Activated T-helper 2 cell treated with anti-CD3 and anti-CD28 coated beads, Interferon-gamma antibody, Interleukin-2, Interleukin-4, amounts not matched to agents 10 μg/mL and 5 μg/mL and 100 μg/mL, durations not matched to agents 14 hours and 24 hours and 36 hours (primary cell): ENCODE measurements at regions of chr10 and their contacts with region 1.

Region 1: DNA sequence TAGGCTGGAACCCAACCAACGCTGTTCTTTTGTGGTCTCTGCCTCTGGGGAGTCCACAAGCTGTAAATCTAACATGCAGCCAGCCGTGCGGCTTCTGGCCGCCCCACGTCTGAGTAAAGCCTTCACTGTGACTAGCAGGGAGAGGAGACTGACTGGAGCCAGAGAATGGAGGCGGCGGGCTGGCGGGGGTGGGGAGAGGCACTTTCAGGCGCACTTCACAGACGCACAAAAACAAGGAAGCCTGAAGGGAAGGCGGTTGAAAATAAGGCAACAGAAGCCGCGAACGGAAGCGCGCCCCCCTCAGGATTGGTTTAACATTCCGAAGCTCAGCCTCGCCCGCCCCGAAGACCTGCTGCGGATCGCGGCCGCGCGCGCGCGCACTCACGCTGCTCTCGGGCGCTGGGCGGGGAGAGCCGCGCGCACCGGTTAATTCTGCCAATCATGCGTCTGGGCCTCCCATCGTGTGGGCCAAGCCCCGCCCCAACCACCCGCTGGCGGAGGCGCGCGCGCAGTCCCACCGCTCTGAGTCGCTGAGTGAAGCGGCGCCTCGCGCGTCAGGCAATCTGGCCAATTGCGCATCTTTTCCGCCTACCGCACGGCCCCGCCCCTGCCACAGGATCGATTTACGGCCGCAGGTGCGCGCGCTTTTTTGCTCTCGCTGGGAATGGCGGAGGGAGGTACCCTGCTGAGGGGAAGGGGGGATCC is at the start of gene SFR1:
- DNase-seq: peak; percentile 99
- H3K4me3 Mint-ChIP-seq: peak within 1 kb of the TSS; percentile 90
- H3K27ac Mint-ChIP-seq: peak within 1 kb of the TSS; percentile 99
- H3K4me1 Mint-ChIP-seq: peaks cover 40% of the 10 kb centered on the region
- H3K27me3 Mint-ChIP-seq: peaks cover 11% of the 10 kb centered on the region
- total RNA-seq, gene SFR1: 11.7 and 12.0 TPM in 2 replicates

Region 2: DNA sequence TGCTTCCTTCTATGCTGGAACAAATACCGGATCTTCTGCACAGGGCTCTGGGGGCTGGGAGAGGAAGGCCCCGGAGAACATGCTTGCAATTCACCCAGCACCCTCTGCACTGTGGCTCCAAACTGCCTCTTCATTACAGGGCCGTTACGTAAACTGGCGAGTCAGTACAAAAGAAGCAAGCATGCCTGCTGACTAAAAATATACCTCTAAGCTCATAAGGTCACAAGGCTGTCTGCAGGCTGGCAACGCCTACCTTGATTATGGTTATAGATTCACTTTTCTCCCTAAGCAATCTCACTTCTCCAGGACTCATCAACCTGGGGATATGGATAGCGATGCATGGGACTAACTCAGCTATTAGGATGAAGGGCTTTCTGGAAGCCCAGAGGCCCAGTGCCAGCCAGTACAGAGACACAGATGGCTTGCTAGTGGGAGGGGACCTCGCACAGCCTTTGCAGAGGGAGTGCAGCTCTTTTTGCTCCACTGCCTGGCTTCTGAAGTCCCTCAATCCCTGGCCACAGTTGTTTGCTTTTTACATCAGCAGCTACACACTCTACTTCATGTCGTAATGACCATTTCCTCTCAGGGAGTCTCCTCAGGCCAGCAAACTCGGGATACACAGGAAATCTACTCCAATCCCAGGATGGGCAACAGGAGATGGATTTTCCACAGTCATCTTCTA is 362.4 kb before region 1 on chr10:
- intact Hi-C with region 1: loop called (anchors 5 kb)
- DNase-seq: peak; percentile 37
- H3K4me3 Mint-ChIP-seq: peak overlapping the region; percentile 27
- H3K27ac Mint-ChIP-seq: peak overlapping the region; percentile 78
- H3K4me1 Mint-ChIP-seq: peaks cover 56% of the 10 kb centered on the region
- H3K27me3 Mint-ChIP-seq: peaks cover 14% of the 10 kb centered on the region

Region 3: GRCh38 chr10:103918053-103918846 is 203.4 kb before region 1 on chr10 and contains the start of gene STN1:
- intact Hi-C with region 1: loop called (anchors 1 kb)
- DNase-seq: peak; percentile 95
- H3K4me3 Mint-ChIP-seq: peak within 1 kb of the TSS; percentile 86
- H3K27ac Mint-ChIP-seq: peak within 1 kb of the TSS; percentile 96
- H3K4me1 Mint-ChIP-seq: peaks cover 31% of the 10 kb centered on the region
- H3K27me3 Mint-ChIP-seq: no peaks in the 10 kb centered on the region
- total RNA-seq, gene STN1: 21.7 and 25.1 TPM in 2 replicates

Region 4: DNA sequence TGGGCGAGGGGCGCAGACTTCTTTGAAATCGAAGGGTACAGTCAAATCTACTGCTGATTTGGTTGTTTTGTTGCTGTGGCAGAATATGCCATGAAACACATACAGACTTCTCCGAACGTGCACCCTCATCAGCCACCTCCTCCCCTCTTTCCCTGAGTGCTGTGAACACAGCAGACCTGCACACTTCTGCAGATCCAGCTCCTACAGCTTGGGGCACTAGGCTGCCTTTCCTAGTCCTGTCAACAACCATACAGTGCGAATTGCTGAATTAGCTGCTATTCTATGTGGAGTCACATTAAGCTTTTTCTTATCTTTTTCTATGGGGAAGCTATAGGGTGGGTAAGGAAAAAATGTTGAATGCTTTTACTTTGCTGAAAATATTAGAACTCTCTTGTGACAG is 93.5 kb before region 1 on chr10:
- intact Hi-C with region 1: loop called (anchors 5 kb)
- DNase-seq: no peak
- H3K4me3 Mint-ChIP-seq: no peak overlapping the region
- H3K27ac Mint-ChIP-seq: no peak overlapping the region
- H3K4me1 Mint-ChIP-seq: peaks cover 3% of the 10 kb centered on the region
- H3K27me3 Mint-ChIP-seq: no peaks in the 10 kb centered on the region

Region 5: GRCh38 chr10:104139221-104139620 is 17.5 kb after region 1 on chr10:
- intact Hi-C with region 1: no loop called
- DNase-seq: no peak
- H3K4me3 Mint-ChIP-seq: no peak overlapping the region
- H3K27ac Mint-ChIP-seq: no peak overlapping the region
- H3K4me1 Mint-ChIP-seq: peaks cover 2% of the 10 kb centered on the region
- H3K27me3 Mint-ChIP-seq: peaks cover 35% of the 10 kb centered on the region

Region 6: GRCh38 chr10:104231784-104232612 is 110.3 kb after region 1 on chr10 and contains the start of gene CFAP43:
- intact Hi-C with region 1: loop called (anchors 5 kb)
- DNase-seq: peak; percentile 98
- H3K4me3 Mint-ChIP-seq: peak within 1 kb of the TSS; percentile 85
- H3K27ac Mint-ChIP-seq: peak within 1 kb of the TSS; percentile 58
- H3K4me1 Mint-ChIP-seq: peaks cover 14% of the 10 kb centered on the region
- H3K27me3 Mint-ChIP-seq: peaks cover 40% of the 10 kb centered on the region
- total RNA-seq, gene CFAP43: 0.07 TPM in 1 of 2 replicates, not detected in the other

Region 7: GRCh38 chr10:104337974-104338735 is 216.5 kb after region 1 on chr10 and contains the start of gene ITPRIP:
- intact Hi-C with region 1: loop called (anchors 5 kb)
- DNase-seq: peak; percentile 74
- H3K4me3 Mint-ChIP-seq: peak within 1 kb of the TSS; percentile 97
- H3K27ac Mint-ChIP-seq: peak within 1 kb of the TSS; percentile 99
- H3K4me1 Mint-ChIP-seq: peaks cover 46% of the 10 kb centered on the region
- H3K27me3 Mint-ChIP-seq: peaks cover 1% of the 10 kb centered on the region
- total RNA-seq, gene ITPRIP: 17.1 and 18.8 TPM in 2 replicates